ENCODE measurements at regions of chr19 and their contacts with region 1.

Region 1: DNA sequence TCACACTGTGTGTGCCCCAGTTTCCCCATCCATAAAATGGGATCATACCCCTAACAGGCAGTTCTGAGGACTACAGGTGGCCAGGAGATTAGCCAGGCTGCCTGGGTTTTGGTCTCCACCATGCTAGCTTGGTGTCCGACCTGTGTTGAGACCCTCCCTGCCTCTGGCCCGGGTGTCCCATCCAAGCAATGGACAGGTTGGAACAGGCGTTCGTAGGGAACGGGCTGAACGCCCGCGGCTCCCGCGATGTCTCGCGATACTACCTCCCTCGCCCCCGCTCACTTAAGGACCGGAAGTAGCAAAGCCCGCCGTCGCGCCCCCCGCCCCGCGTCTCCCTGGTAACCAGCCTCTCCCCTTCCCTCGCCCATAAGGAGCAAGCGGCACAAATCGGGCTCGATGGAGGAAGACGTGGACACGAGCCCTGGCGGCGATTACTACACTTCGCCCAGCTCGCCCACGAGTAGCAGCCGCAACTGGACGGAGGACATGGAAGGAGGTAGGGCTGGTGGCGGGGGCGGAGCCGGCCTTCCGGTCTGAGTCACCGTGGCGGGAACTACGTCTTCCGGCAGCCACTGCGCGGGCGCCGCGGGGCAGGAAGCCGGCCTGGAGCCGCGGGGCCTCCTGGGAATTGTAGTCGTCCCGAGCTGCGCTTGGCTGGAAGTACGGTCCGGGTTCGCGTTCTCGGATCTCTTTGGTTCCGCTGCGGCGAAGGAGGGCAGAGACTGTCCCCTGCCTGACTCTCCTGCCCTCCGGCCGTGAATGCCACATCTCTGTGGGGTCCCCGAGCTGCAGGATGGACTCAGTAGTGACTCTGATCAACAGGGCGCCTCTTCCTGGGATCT is 45.4 kb downstream of the SMIM24 start:
- DNase-seq: peak; percentile 92 to 94
- ATAC-seq: peak; percentile 83 to 86
- H3K4me3 ChIP-seq: peak overlapping the region; percentile 55 to 60 (median 58)
- H3K27ac ChIP-seq: peak overlapping the region; percentile 85 to 98 (median 95)
- H3K4me1 ChIP-seq: peaks cover 33 to 34% of the 10 kb centered on the region in 2 donors
- H3K27me3 ChIP-seq: no peaks in the 10 kb centered on the region
- CTCF ChIP-seq: no peak
- POLR2A ChIP-seq: peak; percentile 28 to 49

Region 2: GRCh38 chr19:3343619-3344502 is 91.1 kb before region 1 on chr19:
- in situ Hi-C with region 1: loop called in 1 of 4 experiments (anchors 5 kb)
- intact Hi-C with region 1: no loop called
- DNase-seq: peak; percentile 74 to 90
- ATAC-seq: peak; percentile 82 to 87
- H3K4me3 ChIP-seq: peak overlapping the region in 3 of 4 donors; percentile 35 to 39 (median 35)
- H3K27ac ChIP-seq: peak overlapping the region; percentile 66 to 77 (median 72)
- H3K4me1 ChIP-seq: peaks cover 15 to 23% of the 10 kb centered on the region in 2 donors
- H3K27me3 ChIP-seq: no peaks in the 10 kb centered on the region
- CTCF ChIP-seq: peak in 3 of 5 experiments; percentile 26 to 41 (median 32)
- POLR2A ChIP-seq: peak in 1 of 2 donors; percentile 9

Region 3: DNA sequence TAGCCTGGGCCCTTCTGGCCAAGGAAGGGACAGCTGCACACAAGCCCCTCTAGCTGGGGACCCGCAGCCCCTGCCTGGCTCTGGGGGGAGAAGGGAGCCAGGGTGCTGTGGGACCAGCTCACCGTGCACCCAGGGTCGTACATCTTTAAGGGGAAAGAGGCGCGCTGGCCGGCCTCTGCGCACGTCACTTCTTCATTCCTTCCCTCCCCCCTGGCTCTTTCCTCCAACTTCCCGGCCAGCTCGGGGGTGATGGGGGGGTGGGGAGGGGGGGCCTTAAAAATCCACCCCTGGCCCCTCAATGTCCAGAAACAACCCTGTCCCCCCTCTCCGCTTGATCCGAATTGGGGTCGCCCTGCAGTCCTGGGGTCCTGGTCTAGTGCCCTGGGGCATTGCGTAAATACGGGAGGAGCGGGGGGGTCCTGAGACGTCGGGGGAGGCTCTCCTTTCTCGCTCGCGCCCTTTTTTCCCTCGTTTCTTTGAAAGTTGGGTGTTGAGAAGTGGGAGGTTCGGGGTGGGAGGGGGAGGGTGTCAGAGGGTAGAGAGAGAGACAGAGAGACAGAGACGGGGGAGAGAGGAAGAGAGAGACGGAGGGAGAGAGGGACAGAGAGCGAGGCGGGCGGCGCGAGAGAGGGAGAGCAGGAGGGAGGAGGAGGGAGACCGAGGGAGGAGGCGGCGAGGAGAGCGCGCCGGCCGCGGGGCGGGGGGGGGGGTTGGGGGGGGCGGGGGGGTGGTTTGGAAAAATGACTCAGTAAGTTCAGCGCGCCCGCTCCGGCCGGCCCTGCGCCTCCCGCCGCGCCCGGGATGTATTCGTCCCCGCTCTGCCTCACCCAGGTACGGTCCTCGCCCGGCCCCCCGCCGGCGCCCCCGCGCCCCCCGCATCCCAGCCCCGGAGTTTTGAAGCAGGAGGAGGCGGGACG is 68.8 kb before region 1 on chr19 and contains the start of gene NFIC:
- in situ Hi-C with region 1: no loop called
- intact Hi-C with region 1: no loop called
- DNase-seq: peak; percentile 74 to 85
- ATAC-seq: peak; percentile 27 to 29
- H3K4me3 ChIP-seq: peak within 1 kb of the TSS; percentile 87 to 99 (median 96)
- H3K27ac ChIP-seq: peak within 1 kb of the TSS; percentile 98 to 100 (median 98)
- H3K4me1 ChIP-seq: peaks cover 35 to 52% of the 10 kb centered on the region in 2 donors
- H3K27me3 ChIP-seq: no peaks in the 10 kb centered on the region
- CTCF ChIP-seq: no peak
- POLR2A ChIP-seq: peak; percentile 35 to 52
- total RNA-seq, gene NFIC: 90.2 to 403 (median 348) TPM

Region 4: DNA sequence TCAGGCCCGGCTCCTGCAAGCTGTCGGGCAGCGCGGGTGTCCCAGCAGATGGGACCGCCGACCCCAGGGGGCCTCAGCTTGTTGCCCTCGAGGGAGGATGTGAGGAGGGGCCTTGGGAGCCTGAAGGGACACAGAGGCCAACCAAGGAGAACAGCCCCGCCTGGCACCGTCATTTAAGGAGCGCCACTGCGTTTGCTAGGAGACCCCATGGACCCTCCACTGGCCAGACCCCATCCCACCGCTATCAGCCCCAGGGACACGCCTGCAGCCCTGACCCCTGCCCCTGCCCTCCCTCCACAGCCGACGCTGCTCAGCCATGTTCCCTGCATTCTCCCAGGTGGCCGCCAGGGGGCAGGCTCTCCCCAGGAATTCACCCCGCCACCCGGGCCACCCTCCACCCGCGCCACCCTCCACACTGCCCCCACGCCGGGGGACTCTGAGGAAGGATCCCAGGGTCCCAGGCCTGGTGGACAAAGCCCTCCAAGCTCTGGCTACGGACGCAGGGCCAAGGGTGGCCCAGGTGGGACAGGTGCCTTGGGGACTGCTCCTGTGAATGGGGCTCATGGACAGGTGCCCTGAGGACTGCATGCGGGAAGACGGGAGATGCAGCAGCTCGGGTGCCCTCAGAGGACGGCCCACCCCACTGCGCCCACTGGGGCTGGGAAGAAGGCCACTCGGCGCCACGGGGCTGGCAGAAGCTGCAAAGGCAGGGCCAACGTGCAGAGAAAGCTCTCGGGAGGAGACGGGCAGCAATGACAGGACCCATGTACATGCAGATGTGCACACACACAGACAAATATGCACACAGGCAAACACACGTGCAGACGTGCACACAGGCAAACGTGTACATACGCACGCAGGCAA is 231.0 kb after region 1 on chr19:
- in situ Hi-C with region 1: no loop called
- intact Hi-C with region 1: no loop called
- DNase-seq: peak in 1 of 2 donors; percentile 50
- ATAC-seq: peak; percentile 19 to 57
- H3K4me3 ChIP-seq: no peak overlapping the region
- H3K27ac ChIP-seq: no peak overlapping the region
- H3K4me1 ChIP-seq: peaks cover 22 to 23% of the 10 kb centered on the region in 2 donors
- H3K27me3 ChIP-seq: no peaks in the 10 kb centered on the region
- CTCF ChIP-seq: peak; percentile 85 to 97 (median 97)
- POLR2A ChIP-seq: no peak